ENCODE measurements at regions of chr10 and their contacts with region 1.

Region 1: GRCh38 chr10:93376372-93377293 is 105.5 kb downstream of the MYOF start:
- DNase-seq: peak; percentile 26 to 92
- H3K4me3 ChIP-seq: no peak overlapping the region
- H3K27ac ChIP-seq: peak overlapping the region; percentile 32 to 78 (median 72)
- H3K4me1 ChIP-seq: peaks cover 0 to 22% (median 6%) of the 10 kb centered on the region in 4 donors
- H3K27me3 ChIP-seq: no peaks in the 10 kb centered on the region
- CTCF ChIP-seq: peak in 6 of 7 experiments; percentile 51 to 98 (median 92)
- EP300 ChIP-seq: no peak
- POLR2A ChIP-seq: no peak

Region 2: GRCh38 chr10:93482145-93482834 is 105.7 kb after region 1 on chr10 and contains the start of gene MYOF:
- intact Hi-C with region 1: loop called (anchors 2 kb)
- DNase-seq: peak; percentile 54 to 92
- H3K4me3 ChIP-seq: peak within 1 kb of the TSS; percentile 46 to 60 (median 54)
- H3K27ac ChIP-seq: peak within 1 kb of the TSS; percentile 88 to 96 (median 91)
- H3K4me1 ChIP-seq: peaks cover 0 to 32% (median 17%) of the 10 kb centered on the region in 4 donors
- H3K27me3 ChIP-seq: no peaks in the 10 kb centered on the region
- CTCF ChIP-seq: peak in 5 of 7 experiments; percentile 43 to 62 (median 52)
- EP300 ChIP-seq: no peak
- POLR2A ChIP-seq: peak in 1 of 4 donors; percentile 5
- total RNA-seq, gene MYOF: 29.5 to 111 (median 72.7) TPM

Measured in stomach (tissue), 19 donors.